ENCODE measurements at regions of chr11 and their contacts with region 1.

Region 1: DNA sequence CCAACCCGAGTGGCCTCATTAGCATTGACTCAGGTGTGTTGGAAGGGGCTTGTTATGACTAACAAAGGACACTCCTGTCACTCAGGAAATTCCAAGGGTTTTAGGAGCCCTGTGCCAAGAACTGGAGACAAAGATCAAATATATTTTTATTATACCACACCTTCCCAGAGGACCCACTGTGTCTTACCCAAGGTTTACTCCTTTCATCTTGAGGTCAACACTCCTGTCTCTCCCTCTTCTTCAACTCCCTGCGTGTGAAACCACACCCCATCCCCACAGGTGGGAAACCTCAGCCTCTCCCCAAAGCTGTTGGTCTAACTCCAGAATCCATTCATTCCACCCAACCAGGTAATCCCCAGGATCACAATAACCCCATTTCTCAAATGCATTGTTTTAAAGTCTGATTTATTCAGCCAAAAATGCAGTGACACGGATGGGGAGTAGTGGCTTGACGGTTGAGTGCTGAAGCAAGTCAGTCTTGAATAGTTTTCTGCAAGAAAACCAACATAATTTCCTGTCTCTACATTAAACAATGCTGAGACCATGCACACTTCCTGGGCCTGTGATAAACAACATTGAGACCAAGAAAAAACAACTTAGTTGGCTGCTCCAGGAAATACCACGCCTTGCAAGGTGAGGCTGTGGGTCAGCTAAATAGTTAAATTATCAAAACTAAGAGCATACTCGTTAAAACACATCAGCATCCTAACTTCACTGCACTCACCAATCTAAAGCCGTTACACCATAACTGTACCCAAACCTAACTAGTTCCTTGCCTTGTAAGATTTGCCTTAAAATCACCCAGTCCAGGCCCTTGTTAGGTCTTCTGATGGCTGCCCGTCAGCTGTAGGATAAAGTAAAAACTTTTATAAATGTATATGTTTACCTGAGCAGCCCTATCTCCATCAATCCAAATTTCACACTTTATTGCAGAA is 38.5 kb upstream of the SPON1 start:
- DNase-seq: peak; percentile 37
- ATAC-seq: peak; percentile 98
- H3K4me3 Mint-ChIP-seq: peak overlapping the region; percentile 74
- H3K27ac Mint-ChIP-seq: peak overlapping the region; percentile 97
- H3K4me1 Mint-ChIP-seq: peaks cover 38% of the 10 kb centered on the region
- H3K27me3 Mint-ChIP-seq: no peaks in the 10 kb centered on the region

Region 2: DNA sequence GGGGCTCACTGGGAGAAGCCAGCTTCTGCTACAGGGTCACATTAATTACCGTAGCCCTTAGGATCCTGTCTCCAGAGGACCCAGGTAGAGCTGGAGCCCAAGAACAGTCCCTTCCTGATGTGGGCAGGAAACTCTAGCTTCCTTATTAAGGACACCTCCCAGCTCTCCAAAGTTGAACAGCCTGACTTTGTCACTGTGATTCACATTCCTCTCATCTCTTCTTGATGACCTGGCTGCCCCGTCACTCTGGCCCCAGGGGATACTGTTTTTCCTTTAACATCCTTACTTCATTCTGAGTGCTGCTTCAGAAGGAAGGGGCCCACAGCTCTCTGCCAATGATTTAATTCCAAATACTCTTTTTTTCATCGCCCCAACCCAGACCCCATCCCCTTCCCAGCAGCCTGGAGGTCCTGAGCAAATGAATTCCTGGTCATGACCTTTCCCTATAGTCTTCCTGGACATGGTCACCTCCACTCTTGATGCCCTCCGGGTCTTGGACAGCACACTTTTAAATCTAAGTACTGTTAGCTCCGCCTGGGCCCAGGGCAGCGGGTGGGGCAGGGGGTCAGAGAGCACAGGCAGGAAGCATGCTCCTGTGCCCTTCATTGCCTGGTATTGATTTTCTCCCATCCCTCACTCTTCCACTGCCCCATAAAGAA is 16.1 kb after region 1 on chr11:
- POLR2A ChIA-PET with region 1: interaction called, 13 read pairs
- DNase-seq: peak; percentile 39
- ATAC-seq: no peak
- H3K4me3 Mint-ChIP-seq: peak overlapping the region; percentile 69
- H3K27ac Mint-ChIP-seq: peak overlapping the region; percentile 66
- H3K4me1 Mint-ChIP-seq: peaks cover 33% of the 10 kb centered on the region
- H3K27me3 Mint-ChIP-seq: peaks cover 14% of the 10 kb centered on the region